Right ventricle myocardium superior (tissue), 1 donor: ENCODE measurements at regions of chr10 and their contacts with region 1.

Region 1: DNA sequence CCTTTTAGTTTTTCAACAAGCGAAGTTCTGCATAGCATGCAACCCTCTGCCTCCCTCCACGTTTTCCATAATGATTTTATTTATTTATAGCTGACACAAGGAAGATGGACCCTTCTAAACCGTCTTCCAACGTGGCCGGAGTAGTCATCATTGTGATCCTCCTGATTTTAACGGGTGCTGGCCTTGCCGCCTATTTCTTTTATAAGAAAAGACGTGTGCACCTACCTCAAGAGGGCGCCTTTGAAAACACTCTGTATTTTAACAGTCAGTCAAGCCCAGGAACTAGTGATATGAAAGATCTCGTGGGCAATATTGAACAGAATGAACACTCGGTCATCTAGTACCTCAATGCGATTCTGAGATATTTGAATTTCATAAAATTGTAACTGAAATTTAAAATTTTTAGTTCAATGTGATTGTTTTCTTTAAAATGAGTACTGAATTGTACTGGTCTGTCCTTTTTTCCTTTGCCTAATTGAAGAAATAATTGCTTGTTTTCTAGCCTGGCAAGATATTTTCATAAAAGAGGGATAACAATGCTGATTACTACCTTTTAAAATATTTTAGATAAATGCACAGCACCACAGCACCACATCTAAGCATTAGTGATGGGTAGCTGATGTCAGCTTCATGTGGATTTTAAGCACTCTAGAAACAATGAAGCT is 41.5 kb upstream of the SLC39A12 start:
- DNase-seq: no peak
- ATAC-seq: peak; percentile 25

Region 2: GRCh38 chr10:17801507-17801906 is 108.8 kb before region 1 on chr10:
- intact Hi-C with region 1: no loop called
- DNase-seq: no peak
- ATAC-seq: no peak

Region 3: GRCh38 chr10:18097524-18097923 is 187.3 kb after region 1 on chr10:
- intact Hi-C with region 1: loop called (anchors 10 kb)
- DNase-seq: no peak
- ATAC-seq: no peak